Upper lobe of right lung (tissue), 1 donor: ENCODE measurements at regions of chr7 and their contacts with region 1.

Region 1: DNA sequence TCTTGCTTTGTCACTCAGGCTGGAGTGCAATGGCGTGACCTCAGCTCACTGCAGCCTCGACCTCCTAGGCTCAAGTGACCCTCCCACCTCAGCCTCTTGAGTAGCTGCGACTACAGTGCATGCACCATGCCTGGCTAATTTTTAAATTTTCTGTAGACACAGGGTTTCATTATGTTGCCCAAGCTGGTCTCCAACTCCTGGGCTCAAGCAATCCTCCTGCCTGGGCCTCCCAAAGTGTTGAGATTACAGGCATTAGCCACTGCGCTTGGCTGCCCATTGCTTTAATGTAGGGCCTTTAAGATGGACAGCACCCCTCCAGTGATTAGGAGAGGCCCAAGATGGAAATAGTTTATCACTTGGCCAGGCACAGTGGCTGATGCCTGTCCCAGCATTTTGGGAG is 39.4 kb downstream of the NIPSNAP2 start:
- DNase-seq: no peak
- ATAC-seq: no peak
- H3K4me3 ChIP-seq: no peak overlapping the region
- H3K27ac ChIP-seq: no peak overlapping the region
- H3K4me1 ChIP-seq: no peaks in the 10 kb centered on the region
- H3K27me3 ChIP-seq: no peaks in the 10 kb centered on the region
- CTCF ChIP-seq: no peak

Region 2: GRCh38 chr7:55546829-55547228 is 456.9 kb before region 1 on chr7:
- intact Hi-C with region 1: no loop called
- DNase-seq: peak; percentile 78
- ATAC-seq: peak; percentile 88
- H3K4me3 ChIP-seq: no peak overlapping the region
- H3K27ac ChIP-seq: no peak overlapping the region
- H3K4me1 ChIP-seq: peaks cover 19% of the 10 kb centered on the region
- H3K27me3 ChIP-seq: no peaks in the 10 kb centered on the region
- CTCF ChIP-seq: no peak

Region 3: GRCh38 chr7:56079450-56080185 is 75.9 kb after region 1 on chr7:
- intact Hi-C with region 1: loop called (anchors 5 kb)
- DNase-seq: peak; percentile 71
- ATAC-seq: peak; percentile 54
- H3K4me3 ChIP-seq: no peak overlapping the region
- H3K27ac ChIP-seq: peak overlapping the region; percentile 44
- H3K4me1 ChIP-seq: peaks cover 9% of the 10 kb centered on the region
- H3K27me3 ChIP-seq: no peaks in the 10 kb centered on the region
- CTCF ChIP-seq: peak; percentile 55